Activated T-helper 2 cell treated with anti-CD3 and anti-CD28 coated beads, Interferon-gamma antibody, Interleukin-2, Interleukin-4, amounts not matched to agents 10 μg/mL and 5 μg/mL and 100 μg/mL, durations not matched to agents 14 hours and 24 hours and 36 hours (primary cell): ENCODE measurements at regions of chr2 and their contacts with region 1.

Region 1: DNA sequence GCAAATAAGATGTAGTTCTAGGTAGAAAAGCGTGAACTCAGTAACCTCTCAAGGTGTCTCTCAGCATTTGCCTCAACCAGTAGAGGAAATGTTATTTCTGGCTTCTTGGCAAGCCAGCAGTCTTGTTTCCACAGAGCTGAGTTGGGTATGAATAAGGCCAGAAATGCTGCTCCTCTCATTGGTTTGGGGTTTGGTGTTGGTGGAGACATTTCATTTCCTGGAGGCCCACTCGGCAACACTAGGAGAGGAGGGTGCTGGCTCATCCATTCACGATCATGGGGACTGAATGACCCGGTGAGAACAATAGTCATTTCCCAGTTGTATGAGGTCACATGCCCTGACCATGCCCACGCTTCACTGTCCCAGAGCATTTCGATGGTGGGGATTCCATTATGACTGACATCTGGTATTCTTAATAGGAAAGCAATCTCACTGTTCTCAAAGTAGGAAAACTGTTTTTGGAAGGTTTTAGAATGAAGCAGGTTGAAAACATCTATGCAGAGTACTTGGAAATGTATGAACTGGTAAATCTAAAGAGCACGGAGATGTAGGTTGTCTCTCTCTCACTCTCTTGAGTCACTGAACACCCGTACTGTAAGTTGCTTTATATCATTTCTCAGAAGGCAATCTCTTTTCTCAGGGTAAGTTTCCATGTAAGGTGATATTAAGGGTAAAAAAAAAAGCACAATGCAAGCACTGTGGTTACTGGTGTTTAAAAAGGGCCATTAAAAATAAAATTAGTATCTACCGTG is 37.1 kb upstream of the CTLA4 start:
- DNase-seq: peak; percentile 36
- H3K4me3 Mint-ChIP-seq: peak overlapping the region; percentile 57
- H3K27ac Mint-ChIP-seq: peak overlapping the region; percentile 95
- H3K4me1 Mint-ChIP-seq: peaks cover 26% of the 10 kb centered on the region
- H3K27me3 Mint-ChIP-seq: no peaks in the 10 kb centered on the region

Region 2: GRCh38 chr2:203804070-203804469 is 26.4 kb before region 1 on chr2:
- intact Hi-C with region 1: loop called (anchors 1 kb)
- DNase-seq: peak; percentile 36
- H3K4me3 Mint-ChIP-seq: no peak overlapping the region
- H3K27ac Mint-ChIP-seq: peak overlapping the region; percentile 61
- H3K4me1 Mint-ChIP-seq: peaks cover 68% of the 10 kb centered on the region
- H3K27me3 Mint-ChIP-seq: no peaks in the 10 kb centered on the region

Region 3: DNA sequence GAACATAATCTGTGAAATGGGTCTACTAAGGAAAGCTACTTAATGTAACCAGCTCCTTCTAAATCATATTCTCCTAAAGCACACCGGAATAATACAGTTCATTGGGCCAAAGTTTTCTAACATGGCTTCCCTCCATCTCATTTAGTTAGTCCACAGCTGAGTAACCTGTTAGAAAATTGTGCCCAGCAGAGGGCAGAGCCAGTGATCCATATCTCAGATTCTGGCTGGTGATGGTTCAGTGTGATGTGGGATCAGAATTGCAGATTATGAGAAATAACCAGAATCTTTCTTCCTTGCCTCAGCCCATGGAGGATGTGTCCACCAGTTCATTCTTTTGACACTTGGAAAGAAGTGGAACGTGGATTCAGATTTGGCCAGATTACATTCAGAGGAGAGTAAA is 27.7 kb after region 1 on chr2:
- intact Hi-C with region 1: loop called (anchors 1 kb)
- DNase-seq: no peak
- H3K4me3 Mint-ChIP-seq: no peak overlapping the region
- H3K27ac Mint-ChIP-seq: peak overlapping the region; percentile 67
- H3K4me1 Mint-ChIP-seq: peaks cover 83% of the 10 kb centered on the region
- H3K27me3 Mint-ChIP-seq: no peaks in the 10 kb centered on the region

Region 4: GRCh38 chr2:203887677-203888076 is 57.2 kb after region 1 on chr2:
- intact Hi-C with region 1: loop called (anchors 1 kb)
- DNase-seq: no peak
- H3K4me3 Mint-ChIP-seq: no peak overlapping the region
- H3K27ac Mint-ChIP-seq: peak overlapping the region; percentile 54
- H3K4me1 Mint-ChIP-seq: peaks cover 67% of the 10 kb centered on the region
- H3K27me3 Mint-ChIP-seq: no peaks in the 10 kb centered on the region

Region 5: GRCh38 chr2:203909261-203909967 is 78.9 kb after region 1 on chr2:
- intact Hi-C with region 1: loop called (anchors 1 kb)
- DNase-seq: no peak
- H3K4me3 Mint-ChIP-seq: no peak overlapping the region
- H3K27ac Mint-ChIP-seq: peak overlapping the region; percentile 35
- H3K4me1 Mint-ChIP-seq: peaks cover 21% of the 10 kb centered on the region
- H3K27me3 Mint-ChIP-seq: peaks cover 2% of the 10 kb centered on the region

Region 6: DNA sequence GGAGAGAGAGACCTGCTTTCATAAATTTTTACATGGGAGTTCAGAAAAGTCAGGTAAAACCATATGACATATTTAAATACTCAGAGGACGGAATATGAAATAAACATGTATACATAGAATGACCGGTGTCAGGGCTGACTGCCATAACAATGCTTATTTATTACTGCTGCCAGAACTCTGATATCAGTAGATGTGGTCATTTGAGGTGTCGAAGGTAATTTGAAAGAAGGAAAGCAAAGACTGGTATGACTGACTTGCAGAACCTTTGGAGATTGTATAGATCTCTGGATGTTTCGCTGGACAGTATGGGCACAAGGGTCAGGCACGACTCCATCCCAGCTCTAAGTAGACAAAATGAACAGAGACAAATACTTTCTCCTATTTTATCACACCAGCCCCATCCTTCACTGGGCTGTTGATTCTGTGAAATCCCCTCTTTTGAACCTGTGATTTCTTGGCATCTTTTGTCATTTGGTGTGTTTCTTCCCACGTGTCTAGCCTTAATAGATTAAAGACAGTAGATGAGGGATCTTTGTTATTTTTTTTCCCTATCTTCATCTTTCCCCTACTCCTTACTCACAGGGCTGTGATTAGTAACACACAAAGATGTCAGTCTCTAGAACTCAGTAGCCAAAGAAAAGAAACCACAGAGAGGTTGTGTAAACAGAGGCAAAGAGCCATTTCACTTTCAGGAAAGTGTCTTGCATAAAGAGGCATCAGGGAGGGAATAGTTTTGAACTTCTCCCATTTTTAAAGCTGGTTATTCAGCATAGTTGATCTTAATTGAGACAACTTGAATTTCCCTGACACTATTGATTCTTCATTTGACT is 167.7 kb after region 1 on chr2:
- intact Hi-C with region 1: loop called (anchors 5 kb)
- DNase-seq: no peak
- H3K4me3 Mint-ChIP-seq: peak overlapping the region; percentile 24
- H3K27ac Mint-ChIP-seq: peak overlapping the region; percentile 77
- H3K4me1 Mint-ChIP-seq: peaks cover 64% of the 10 kb centered on the region
- H3K27me3 Mint-ChIP-seq: no peaks in the 10 kb centered on the region

Region 7: GRCh38 chr2:204051476-204051875 is 221.0 kb after region 1 on chr2:
- intact Hi-C with region 1: no loop called
- DNase-seq: no peak
- H3K4me3 Mint-ChIP-seq: no peak overlapping the region
- H3K27ac Mint-ChIP-seq: no peak overlapping the region
- H3K4me1 Mint-ChIP-seq: peaks cover 17% of the 10 kb centered on the region
- H3K27me3 Mint-ChIP-seq: peaks cover 28% of the 10 kb centered on the region